Aorta (tissue), 5 donors: ENCODE measurements at regions of chr17 and their contacts with region 1.

Region 1: GRCh38 chr17:40113110-40113906 is 8.5 kb upstream of the MSL1 start:
- DNase-seq: peak; percentile 95
- ATAC-seq: peak; percentile 87
- H3K4me3 ChIP-seq: peak overlapping the region in 1 of 2 donors; percentile 4
- H3K27ac ChIP-seq: peak overlapping the region; percentile 19 to 38
- H3K4me1 ChIP-seq: peaks cover 0 to 4% of the 10 kb centered on the region in 2 donors
- H3K27me3 ChIP-seq: no peaks in the 10 kb centered on the region

Region 2: GRCh38 chr17:40068917-40069750 is 44.2 kb before region 1 on chr17:
- intact Hi-C with region 1: loop called (anchors 5 kb)
- DNase-seq: peak; percentile 94 to 95
- ATAC-seq: peak; percentile 77
- H3K4me3 ChIP-seq: no peak overlapping the region
- H3K27ac ChIP-seq: peak overlapping the region; percentile 49 to 90
- H3K4me1 ChIP-seq: peaks cover 1 to 7% of the 10 kb centered on the region in 2 donors
- H3K27me3 ChIP-seq: no peaks in the 10 kb centered on the region

Region 3: DNA sequence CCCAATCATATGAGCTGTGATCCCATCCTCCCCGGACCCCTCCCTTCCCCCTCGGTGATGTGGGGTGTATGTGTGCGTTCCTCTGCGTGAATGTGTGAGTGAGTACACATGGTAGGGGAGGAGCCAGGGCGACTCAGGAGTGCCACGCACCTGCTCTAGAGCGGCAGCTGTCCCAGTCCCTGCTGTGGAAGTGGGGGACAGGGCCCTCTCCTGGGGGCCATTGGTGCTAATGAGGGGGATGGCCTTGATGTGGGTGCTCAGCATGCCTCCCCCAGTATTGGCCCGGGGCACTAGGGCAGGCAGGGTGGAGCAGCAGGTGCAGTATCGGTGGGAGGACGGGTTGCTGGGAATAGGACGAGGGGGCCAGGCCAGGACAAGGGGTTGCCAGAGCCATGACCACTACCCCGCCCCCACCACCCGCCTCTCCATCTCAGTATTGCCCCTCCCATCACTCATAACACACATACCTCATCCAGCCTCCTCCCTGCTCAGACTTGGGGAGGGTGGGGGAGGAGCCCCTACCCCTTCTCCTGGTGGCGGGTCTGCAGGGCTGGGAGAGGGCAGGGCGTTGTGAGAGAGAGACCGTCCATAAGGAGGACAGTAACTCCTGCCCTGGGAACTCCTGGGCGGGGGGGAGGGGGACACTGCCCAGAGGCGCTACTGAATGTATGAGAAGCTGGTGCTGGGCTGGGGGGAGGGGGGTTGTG is 21.5 kb before region 1 on chr17:
- intact Hi-C with region 1: loop called in 1 of 2 experiments (anchors 2 kb)
- DNase-seq: peak in 1 of 2 donors; percentile 60
- ATAC-seq: peak; percentile 3
- H3K4me3 ChIP-seq: no peak overlapping the region
- H3K27ac ChIP-seq: peak overlapping the region in 1 of 2 donors; percentile 53
- H3K4me1 ChIP-seq: no peaks in the 10 kb centered on the region
- H3K27me3 ChIP-seq: no peaks in the 10 kb centered on the region

Region 4: DNA sequence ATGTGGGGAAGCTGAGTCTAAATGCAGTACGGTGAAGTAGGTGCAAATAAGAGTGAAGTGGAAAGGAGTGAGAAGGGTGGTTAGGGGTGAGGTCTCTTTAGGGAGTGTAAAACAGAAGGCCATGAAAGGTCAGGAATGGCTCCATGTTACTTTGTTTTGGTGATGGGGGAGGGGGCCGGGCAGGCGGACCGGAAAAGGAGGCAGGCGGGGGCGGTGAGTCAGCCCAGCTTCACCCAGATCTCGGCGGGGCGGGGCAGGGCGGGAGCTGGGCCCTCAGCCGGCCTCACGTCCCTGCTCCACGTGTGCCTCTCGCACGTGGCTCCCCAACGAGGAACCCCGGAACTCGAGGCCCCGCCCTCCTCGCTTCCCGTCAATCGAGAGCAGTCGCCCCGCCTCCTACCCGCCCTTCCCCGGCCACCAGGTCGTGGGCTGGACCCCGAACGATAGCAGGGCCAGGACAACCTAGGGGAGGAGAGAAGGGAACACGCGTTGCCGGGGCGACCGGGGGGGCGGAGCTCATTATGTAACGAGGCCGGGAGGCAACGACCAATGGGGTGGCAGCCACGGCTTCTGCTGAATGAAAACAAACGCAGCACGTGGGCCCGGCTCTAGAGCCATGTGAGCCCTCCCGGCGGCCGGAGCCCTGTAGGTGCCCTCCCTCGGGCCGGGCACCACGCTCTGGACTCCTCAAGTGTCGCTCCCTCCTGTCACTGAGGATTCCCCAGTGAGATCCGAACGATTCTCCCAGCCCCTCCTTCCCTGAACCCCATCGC is 14.3 kb before region 1 on chr17:
- intact Hi-C with region 1: loop called in 1 of 2 experiments (anchors 1 kb)
- DNase-seq: peak; percentile 100
- ATAC-seq: peak; percentile 90
- H3K4me3 ChIP-seq: peak overlapping the region; percentile 43 to 76
- H3K27ac ChIP-seq: peak overlapping the region; percentile 87 to 92
- H3K4me1 ChIP-seq: no peaks in the 10 kb centered on the region
- H3K27me3 ChIP-seq: no peaks in the 10 kb centered on the region

Region 5: DNA sequence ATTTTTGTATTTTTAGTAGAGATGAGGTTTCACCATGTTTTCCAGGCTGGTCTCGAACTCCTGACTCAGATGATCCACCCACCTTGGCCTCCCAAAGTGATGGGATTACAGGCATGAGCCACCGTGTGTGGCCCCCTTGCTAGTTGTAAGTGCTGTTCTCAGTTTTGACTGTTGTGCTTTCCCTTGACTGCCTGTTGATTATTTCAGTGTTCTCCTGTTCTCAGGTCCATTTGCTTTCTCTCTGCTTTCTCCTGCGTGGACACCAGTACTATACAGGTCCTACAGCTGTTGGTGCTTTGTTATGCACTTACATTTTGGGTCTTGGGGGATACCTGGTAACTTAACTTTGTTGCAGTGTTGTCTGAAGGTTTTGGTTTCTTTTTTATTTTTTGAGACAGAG is 35.2 kb after region 1 on chr17:
- intact Hi-C with region 1: loop called in 1 of 2 experiments (anchors 5 kb)
- DNase-seq: no peak
- ATAC-seq: no peak
- H3K4me3 ChIP-seq: no peak overlapping the region
- H3K27ac ChIP-seq: no peak overlapping the region
- H3K4me1 ChIP-seq: no peaks in the 10 kb centered on the region
- H3K27me3 ChIP-seq: no peaks in the 10 kb centered on the region

Region 6: DNA sequence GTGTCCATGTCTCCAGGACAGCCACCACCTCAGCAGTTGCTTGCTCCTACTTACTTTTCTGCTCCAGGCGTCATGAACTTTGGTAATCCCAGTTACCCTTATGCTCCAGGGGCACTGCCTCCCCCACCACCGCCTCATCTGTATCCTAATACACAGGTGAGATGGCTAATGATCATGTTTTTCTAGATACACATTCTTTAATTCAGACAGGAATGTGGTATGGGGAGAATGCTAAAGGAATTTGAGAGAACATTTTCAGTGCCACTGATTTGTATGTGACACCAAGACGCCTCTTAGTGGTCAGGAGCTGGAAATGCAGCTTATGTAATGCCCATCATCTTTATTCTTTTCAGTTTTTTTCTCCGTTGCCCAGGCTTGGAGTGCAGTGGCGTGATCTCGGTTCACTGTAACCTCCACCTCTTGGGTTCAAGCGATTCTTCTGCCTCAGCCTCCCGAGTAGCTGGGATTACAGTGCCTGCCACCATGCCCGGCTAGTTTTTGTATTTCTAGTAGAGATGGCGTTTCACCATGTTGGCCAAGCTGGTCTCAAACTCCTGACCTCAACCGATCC is 55.0 kb after region 1 on chr17:
- intact Hi-C with region 1: loop called (anchors 2 kb)
- DNase-seq: no peak
- ATAC-seq: peak; percentile 85
- H3K4me3 ChIP-seq: no peak overlapping the region
- H3K27ac ChIP-seq: peak overlapping the region in 1 of 2 donors; percentile 71
- H3K4me1 ChIP-seq: peaks cover 0 to 3% of the 10 kb centered on the region in 2 donors
- H3K27me3 ChIP-seq: no peaks in the 10 kb centered on the region

Region 7: GRCh38 chr17:40322356-40323315 is 209.3 kb after region 1 on chr17:
- intact Hi-C with region 1: loop called in 1 of 2 experiments (anchors 5 kb)
- DNase-seq: peak; percentile 92 to 93
- ATAC-seq: peak; percentile 55
- H3K4me3 ChIP-seq: no peak overlapping the region
- H3K27ac ChIP-seq: peak overlapping the region; percentile 24 to 85
- H3K4me1 ChIP-seq: peaks cover 0 to 5% of the 10 kb centered on the region in 2 donors
- H3K27me3 ChIP-seq: no peaks in the 10 kb centered on the region